Cardiac septum (tissue), 1 donor: ENCODE measurements at regions of chr5 and their contacts with region 1.

Region 1: DNA sequence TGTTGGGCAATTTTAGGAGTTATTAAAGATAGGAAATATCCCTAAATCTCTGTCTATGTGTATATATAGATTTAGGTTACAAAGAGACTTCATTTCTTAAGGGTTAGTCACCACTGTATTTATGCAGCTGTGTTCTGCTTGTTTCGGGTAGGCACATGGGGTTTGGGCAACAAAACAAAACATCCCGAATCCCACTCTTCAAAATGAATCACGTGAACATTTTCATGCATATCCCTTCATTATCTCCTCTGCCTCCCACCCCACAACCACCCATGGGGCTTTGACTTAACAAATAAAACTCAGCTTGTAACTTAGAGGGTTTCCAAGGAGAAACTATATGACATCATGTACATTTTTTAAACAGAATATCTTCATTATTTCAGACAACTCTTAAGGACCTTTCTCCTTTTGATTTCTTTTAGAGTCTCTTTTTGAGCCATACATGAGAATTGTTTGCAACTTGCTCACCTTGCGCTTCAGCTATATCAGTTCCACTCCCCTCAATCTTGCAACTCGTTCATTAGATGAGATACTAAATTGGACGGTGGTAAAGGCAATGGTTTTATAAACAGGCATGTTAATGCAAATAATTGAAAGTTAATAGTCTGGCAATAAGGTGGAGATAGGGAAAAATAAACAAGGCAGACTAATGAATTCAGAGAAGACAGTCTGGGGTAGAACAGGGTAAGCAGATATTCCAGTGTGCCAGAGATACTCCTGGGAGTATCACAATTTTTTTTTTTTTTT is 136.7 kb downstream of the CD180 start:
- DNase-seq: no peak

Region 2: DNA sequence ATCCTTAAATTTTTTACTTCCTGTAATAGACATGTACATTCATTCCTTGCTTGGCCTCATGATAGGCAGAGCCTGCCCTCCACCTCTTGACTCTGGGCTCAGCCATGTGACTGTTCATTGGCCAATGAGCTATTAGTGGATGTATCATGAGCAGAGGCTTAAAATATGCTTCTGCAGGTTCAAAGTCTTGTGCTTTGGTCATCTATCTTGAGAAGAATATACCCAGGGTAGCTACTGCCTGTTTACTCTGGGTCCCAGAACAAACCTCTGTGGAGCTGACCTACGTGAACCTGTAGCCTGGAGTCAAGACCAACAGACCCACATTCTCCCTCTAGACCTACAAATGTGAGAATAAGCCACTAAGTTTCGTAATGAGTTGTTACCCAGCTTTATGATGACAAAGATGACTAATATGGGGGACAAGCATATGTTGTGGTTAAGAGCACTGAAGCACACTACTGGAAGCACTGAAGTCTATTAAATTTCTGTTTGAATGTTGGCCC is 219.4 kb before region 1 on chr5:
- intact Hi-C with region 1: no loop called
- DNase-seq: no peak

Region 3: DNA sequence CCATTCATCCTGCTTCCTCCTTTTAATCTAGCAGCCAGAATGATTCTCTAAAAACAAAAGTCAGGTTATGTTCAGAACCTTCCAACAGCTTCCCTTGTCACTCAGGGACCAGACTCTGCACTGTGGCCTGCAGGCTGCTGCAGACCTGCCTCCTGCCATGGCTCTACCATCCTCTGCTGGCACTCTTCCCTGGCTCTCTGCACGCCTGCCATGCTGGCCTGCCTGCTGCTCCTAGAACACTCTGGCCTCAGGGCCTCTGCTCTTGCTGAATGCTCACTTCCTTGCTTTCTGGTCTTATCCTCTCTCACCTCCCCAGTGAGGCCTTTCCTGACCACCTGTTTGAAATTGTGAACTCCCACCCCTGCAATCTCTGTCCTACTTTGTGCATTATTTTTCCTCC is 12.8 kb before region 1 on chr5:
- intact Hi-C with region 1: no loop called
- DNase-seq: peak; percentile 86

Region 4: GRCh38 chr5:67095346-67096171 is 35.6 kb after region 1 on chr5:
- intact Hi-C with region 1: loop called (anchors 5 kb)
- DNase-seq: peak; percentile 81

Region 5: GRCh38 chr5:67115246-67115645 is 55.3 kb after region 1 on chr5:
- intact Hi-C with region 1: no loop called
- DNase-seq: no peak